ENCODE measurements at regions of chr12 and their contacts with region 1.

Region 1: DNA sequence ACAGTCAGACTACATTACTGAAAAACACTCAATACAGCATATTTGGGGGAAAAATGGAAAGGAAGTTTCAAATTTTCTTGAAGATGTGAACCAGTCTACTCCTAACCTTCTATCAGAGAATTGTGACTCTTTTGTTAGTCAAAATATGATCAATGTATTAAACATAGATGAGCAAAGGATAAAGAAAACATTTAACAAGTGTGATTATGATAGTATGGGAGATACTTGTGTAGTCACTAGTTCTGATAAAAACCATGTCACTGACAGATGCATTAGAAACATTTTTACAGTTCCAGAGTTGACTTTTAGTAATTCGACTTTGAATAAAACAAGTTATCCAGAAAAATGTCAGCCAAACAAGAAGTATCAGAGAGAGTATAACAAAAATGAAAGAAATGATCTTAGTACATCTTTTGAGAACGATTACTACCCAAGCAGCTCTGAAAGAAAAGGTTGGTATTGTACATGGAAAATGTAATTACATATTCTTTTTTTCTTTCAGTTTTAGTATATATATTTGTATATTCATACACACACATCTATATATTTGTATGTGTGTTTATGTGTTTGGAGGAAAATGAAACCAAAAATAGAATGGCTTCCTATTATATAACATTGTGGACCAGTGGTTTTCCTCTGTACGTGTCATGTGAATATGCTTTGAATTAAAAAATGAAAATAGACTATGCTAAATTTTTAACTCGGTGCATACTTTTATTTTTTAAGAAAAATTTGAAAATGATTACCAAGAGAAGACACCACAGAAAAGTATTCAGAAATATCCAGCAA is 63.3 kb upstream of the ABCD2 start:
- DNase-seq: peak in 2 of 9 experiments; percentile 52 to 75
- ATAC-seq: peak; percentile 88
- H3K4me3 ChIP-seq: peak overlapping the region; percentile 24 to 44
- H3K4me3 Mint-ChIP-seq: peak overlapping the region; percentile 88
- H3K27ac ChIP-seq: peak overlapping the region; percentile 57 to 86
- H3K27ac Mint-ChIP-seq: peak overlapping the region; percentile 98
- H3K4me1 ChIP-seq: peaks cover 23% of the 10 kb centered on the region
- H3K4me1 Mint-ChIP-seq: peaks cover 29% of the 10 kb centered on the region
- H3K27me3 ChIP-seq: no peaks in the 10 kb centered on the region
- H3K27me3 Mint-ChIP-seq: no peaks in the 10 kb centered on the region
- CTCF ChIP-seq: no peak

Region 2: DNA sequence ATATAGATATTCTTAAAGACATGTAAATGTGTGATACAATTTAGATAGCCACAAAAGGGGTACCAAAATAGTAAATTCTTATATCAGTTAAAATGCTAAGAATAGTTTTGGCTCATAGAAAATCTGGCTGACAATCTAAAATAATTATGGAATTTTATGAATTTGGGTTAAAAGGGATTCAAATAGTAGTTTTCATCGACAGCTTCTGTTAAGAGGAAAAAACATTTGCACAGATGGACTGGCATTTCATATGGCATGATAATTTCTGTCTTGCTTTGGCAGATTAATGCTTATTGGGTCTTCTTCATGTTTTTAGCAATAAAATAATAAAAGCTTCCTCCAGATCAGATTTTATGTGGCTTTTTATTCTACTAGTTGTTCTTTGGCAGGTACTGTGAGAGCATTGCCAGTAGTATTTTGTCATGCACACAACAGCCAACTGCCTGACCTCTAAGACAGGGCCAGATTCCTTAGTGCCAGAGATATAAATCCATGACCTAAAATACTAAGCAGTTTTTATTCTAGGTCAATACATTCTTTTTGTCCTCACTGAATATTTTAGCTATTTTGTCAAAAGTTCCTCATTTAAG is 72.4 kb before region 1 on chr12:
- CTCF ChIA-PET with region 1: no interaction called
- POLR2A ChIA-PET with region 1: no interaction called
- intact Hi-C with region 1: loop called in 1 of 2 experiments (anchors 5 kb)
- DNase-seq: no peak
- ATAC-seq: no peak
- H3K4me3 ChIP-seq: no peak overlapping the region
- H3K4me3 Mint-ChIP-seq: no peak overlapping the region
- H3K27ac ChIP-seq: no peak overlapping the region
- H3K27ac Mint-ChIP-seq: peak overlapping the region; percentile 72
- H3K4me1 ChIP-seq: peaks cover 20% of the 10 kb centered on the region
- H3K4me1 Mint-ChIP-seq: peaks cover 75% of the 10 kb centered on the region
- H3K27me3 ChIP-seq: no peaks in the 10 kb centered on the region
- H3K27me3 Mint-ChIP-seq: no peaks in the 10 kb centered on the region
- CTCF ChIP-seq: no peak

Region 3: GRCh38 chr12:39723831-39724230 is 40.9 kb after region 1 on chr12:
- CTCF ChIA-PET with region 1: no interaction called
- POLR2A ChIA-PET with region 1: no interaction called
- intact Hi-C with region 1: no loop called
- DNase-seq: peak in 3 of 9 experiments; percentile 13 to 24 (median 20)
- ATAC-seq: peak; percentile 36
- H3K4me3 ChIP-seq: no peak overlapping the region
- H3K4me3 Mint-ChIP-seq: no peak overlapping the region
- H3K27ac ChIP-seq: no peak overlapping the region
- H3K27ac Mint-ChIP-seq: no peak overlapping the region
- H3K4me1 ChIP-seq: no peaks in the 10 kb centered on the region
- H3K4me1 Mint-ChIP-seq: no peaks in the 10 kb centered on the region
- H3K27me3 ChIP-seq: no peaks in the 10 kb centered on the region
- H3K27me3 Mint-ChIP-seq: no peaks in the 10 kb centered on the region
- CTCF ChIP-seq: no peak

Region 4: GRCh38 chr12:39780919-39781467 is 98.1 kb after region 1 on chr12:
- CTCF ChIA-PET with region 1: no interaction called
- POLR2A ChIA-PET with region 1: no interaction called
- intact Hi-C with region 1: no loop called
- DNase-seq: no peak
- ATAC-seq: no peak
- H3K4me3 ChIP-seq: no peak overlapping the region
- H3K4me3 Mint-ChIP-seq: no peak overlapping the region
- H3K27ac ChIP-seq: no peak overlapping the region
- H3K27ac Mint-ChIP-seq: no peak overlapping the region
- H3K4me1 ChIP-seq: no peaks in the 10 kb centered on the region
- H3K4me1 Mint-ChIP-seq: no peaks in the 10 kb centered on the region
- H3K27me3 ChIP-seq: no peaks in the 10 kb centered on the region
- H3K27me3 Mint-ChIP-seq: no peaks in the 10 kb centered on the region
- CTCF ChIP-seq: no peak

Region 5: DNA sequence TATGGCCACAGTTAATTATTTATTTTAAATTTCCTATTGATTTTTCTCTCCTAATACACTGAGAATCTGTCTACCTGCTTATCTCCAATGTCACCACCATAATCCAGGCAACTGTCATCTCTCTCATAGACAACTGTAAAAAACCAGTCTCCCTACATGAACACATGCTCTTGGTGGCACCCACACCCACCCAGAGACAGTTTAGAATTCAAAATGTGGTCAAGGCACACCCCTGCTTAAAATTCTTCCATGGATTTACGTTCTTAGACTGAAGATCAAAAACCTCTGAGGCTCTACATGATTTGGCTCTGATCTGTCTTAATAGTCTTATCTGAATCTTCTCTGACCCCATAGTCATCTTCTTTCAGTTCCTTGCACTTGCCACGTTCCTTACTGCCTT is 177.8 kb after region 1 on chr12:
- CTCF ChIA-PET with region 1: no interaction called
- POLR2A ChIA-PET with region 1: no interaction called
- intact Hi-C with region 1: no loop called
- DNase-seq: no peak
- ATAC-seq: no peak
- H3K4me3 ChIP-seq: no peak overlapping the region
- H3K4me3 Mint-ChIP-seq: no peak overlapping the region
- H3K27ac ChIP-seq: no peak overlapping the region
- H3K27ac Mint-ChIP-seq: no peak overlapping the region
- H3K4me1 ChIP-seq: no peaks in the 10 kb centered on the region
- H3K4me1 Mint-ChIP-seq: no peaks in the 10 kb centered on the region
- H3K27me3 ChIP-seq: no peaks in the 10 kb centered on the region
- H3K27me3 Mint-ChIP-seq: no peaks in the 10 kb centered on the region
- CTCF ChIP-seq: no peak